ENCODE measurements at regions of chrX and their contacts with region 1.

Region 1: DNA sequence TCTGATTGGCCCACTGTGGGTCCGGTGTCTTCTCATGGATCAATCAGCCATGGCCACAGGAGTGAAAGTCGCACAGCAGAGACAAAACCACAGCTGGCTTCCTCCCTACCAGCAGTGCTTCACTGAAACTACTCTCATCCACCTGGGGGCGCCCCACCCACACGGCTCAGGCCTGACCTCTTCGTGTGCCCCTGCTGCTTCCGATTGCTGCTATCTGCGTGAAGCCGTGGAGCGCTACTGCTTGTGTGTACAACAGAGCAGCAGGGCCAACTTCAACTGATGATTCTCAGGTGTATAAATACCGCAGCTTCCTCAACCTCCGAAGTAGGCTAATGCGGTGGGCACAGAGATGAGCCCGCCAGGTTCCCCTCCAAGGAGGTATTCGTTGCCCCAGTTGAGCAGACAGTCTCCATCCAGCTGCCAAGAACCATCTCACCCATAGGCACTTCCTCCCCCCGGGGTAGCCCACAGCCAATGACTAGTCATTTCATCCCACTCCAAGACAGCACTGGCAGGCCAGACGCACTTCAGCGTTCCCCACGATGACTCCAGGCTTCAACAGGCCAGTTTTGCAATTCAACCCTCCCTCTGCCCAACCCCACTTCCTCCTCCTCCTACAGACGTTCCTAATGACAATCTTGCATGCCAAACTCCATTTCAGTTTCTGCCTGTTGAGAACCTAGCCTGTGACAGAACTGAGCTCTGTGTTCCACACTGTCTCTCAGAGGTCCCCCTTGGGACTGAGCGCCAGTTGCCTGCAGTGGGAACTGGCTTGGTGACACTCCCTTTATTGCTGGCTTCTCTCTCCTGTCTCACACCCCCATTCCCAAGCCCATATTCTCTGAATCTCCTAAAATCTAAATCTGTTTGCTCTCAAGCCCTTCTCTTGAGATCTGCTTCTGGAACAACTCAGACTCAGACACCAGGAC is 41.3 kb upstream of the ATP6AP2 start:
- DNase-seq: peak; percentile 56
- ATAC-seq: peak; percentile 90
- H3K4me3 ChIP-seq: no peak overlapping the region
- H3K27ac ChIP-seq: peak overlapping the region; percentile 59
- H3K4me1 ChIP-seq: peaks cover 11% of the 10 kb centered on the region
- H3K27me3 ChIP-seq: peaks cover 0 to 2% of the 10 kb centered on the region in 2 experiments; a peak in 2 of 4 replicates
- CTCF ChIP-seq: peak; percentile 30 to 51 (median 48); a peak in 5 of 6 replicates
- EP300 ChIP-seq: no peak
- POLR2A ChIP-seq: no peak
- RAD21 ChIP-seq: 0 out of 2 replicates have a peak, but pooled peaks have one; percentile 26

Region 2: DNA sequence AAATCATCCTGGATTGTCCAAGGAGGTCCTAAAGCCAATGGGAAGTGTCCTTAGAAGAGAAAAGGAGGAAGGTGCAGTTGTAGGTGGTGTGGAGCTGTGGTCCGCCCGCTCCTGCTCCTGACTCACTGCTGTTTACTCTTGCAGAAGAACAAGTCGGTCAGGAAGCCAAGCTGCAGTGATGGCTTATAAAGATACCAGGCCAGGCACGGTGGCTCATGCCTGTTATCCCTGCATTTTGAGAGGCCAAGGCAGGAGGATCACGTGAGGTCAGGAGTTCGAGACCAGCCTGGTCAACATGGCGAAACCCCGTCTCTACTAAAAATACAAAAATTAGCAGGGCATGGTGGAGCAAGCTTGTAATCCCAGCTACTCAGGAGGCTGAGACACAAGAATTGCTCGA is 25.1 kb before region 1 on chrX:
- CTCF ChIA-PET with region 1: no interaction called
- POLR2A ChIA-PET with region 1: no interaction called
- RAD21 ChIA-PET with region 1: no interaction called
- SMC1A ChIA-PET with region 1: no interaction called
- in situ Hi-C with region 1: no loop called
- intact Hi-C with region 1: no loop called
- DNase-seq: no peak
- ATAC-seq: no peak
- H3K4me3 ChIP-seq: no peak overlapping the region
- H3K27ac ChIP-seq: no peak overlapping the region
- H3K4me1 ChIP-seq: no peaks in the 10 kb centered on the region
- H3K27me3 ChIP-seq: no peaks in the 10 kb centered on the region; a peak in 1 of 4 replicates
- CTCF ChIP-seq: no peak
- EP300 ChIP-seq: no peak
- POLR2A ChIP-seq: no peak
- RAD21 ChIP-seq: no peak

Region 3: GRCh38 chrX:40552768-40553167 is 13.3 kb after region 1 on chrX:
- CTCF ChIA-PET with region 1: interaction called, 30 read pairs
- POLR2A ChIA-PET with region 1: no interaction called
- RAD21 ChIA-PET with region 1: interaction called, 8 read pairs
- SMC1A ChIA-PET with region 1: interaction called, 16 read pairs
- in situ Hi-C with region 1: no loop called
- intact Hi-C with region 1: no loop called
- DNase-seq: no peak
- ATAC-seq: peak; percentile 37
- H3K4me3 ChIP-seq: no peak overlapping the region
- H3K27ac ChIP-seq: no peak overlapping the region
- H3K4me1 ChIP-seq: no peaks in the 10 kb centered on the region
- H3K27me3 ChIP-seq: no peaks in the 10 kb centered on the region; a peak in 2 of 4 replicates
- CTCF ChIP-seq: peak in 2 of 3 experiments; percentile 20 to 38; a peak in 3 of 6 replicates
- EP300 ChIP-seq: no peak
- POLR2A ChIP-seq: no peak
- RAD21 ChIP-seq: peak; percentile 40

Region 4: GRCh38 chrX:40573763-40574162 is 34.3 kb after region 1 on chrX:
- CTCF ChIA-PET with region 1: interaction called, 50 read pairs
- POLR2A ChIA-PET with region 1: interaction called, 6 read pairs
- RAD21 ChIA-PET with region 1: interaction called, 18 read pairs
- SMC1A ChIA-PET with region 1: interaction called, 20 read pairs
- in situ Hi-C with region 1: no loop called
- intact Hi-C with region 1: no loop called
- DNase-seq: no peak
- ATAC-seq: peak; percentile 72
- H3K4me3 ChIP-seq: no peak overlapping the region
- H3K27ac ChIP-seq: no peak overlapping the region
- H3K4me1 ChIP-seq: peaks cover 3% of the 10 kb centered on the region; the same call in 1 of the 2 replicates
- H3K27me3 ChIP-seq: no peaks in the 10 kb centered on the region
- CTCF ChIP-seq: peak; percentile 86 to 90 (median 87)
- EP300 ChIP-seq: no peak
- POLR2A ChIP-seq: no peak
- RAD21 ChIP-seq: peak; percentile 48

Region 5: DNA sequence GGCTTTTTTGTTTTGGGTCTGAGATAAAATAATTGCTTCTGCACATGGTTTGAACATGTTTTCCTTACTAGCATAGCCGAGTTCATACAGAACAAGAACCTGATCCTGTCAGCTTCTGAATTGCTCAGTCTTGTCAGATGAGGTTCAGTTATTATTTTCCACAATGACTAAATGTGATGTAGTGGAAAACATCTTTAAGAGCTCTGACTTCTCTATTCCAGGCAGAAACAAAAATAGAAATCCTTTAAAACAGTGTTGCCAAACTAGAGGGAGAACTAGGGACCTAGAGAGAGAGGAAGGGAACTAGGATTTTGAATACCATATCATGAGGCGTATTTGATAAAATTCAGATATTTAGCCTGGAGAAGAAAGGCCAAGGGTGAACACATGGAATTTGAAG is 43.3 kb after region 1 on chrX:
- CTCF ChIA-PET with region 1: interaction called, 12 read pairs
- POLR2A ChIA-PET with region 1: interaction called, 6 read pairs
- RAD21 ChIA-PET with region 1: interaction called, 4 read pairs
- SMC1A ChIA-PET with region 1: interaction called, 4 read pairs
- in situ Hi-C with region 1: no loop called
- intact Hi-C with region 1: no loop called
- DNase-seq: no peak
- ATAC-seq: no peak
- H3K4me3 ChIP-seq: no peak overlapping the region
- H3K27ac ChIP-seq: no peak overlapping the region
- H3K4me1 ChIP-seq: no peaks in the 10 kb centered on the region
- H3K27me3 ChIP-seq: no peaks in the 10 kb centered on the region
- CTCF ChIP-seq: no peak
- EP300 ChIP-seq: no peak
- POLR2A ChIP-seq: no peak
- RAD21 ChIP-seq: no peak

Region 6: GRCh38 chrX:40603446-40603845 is 64.0 kb after region 1 on chrX:
- CTCF ChIA-PET with region 1: interaction called, 10 read pairs
- POLR2A ChIA-PET with region 1: no interaction called
- RAD21 ChIA-PET with region 1: no interaction called
- SMC1A ChIA-PET with region 1: interaction called, 5 read pairs
- in situ Hi-C with region 1: no loop called
- intact Hi-C with region 1: no loop called
- DNase-seq: no peak
- ATAC-seq: no peak
- H3K4me3 ChIP-seq: no peak overlapping the region
- H3K27ac ChIP-seq: no peak overlapping the region
- H3K4me1 ChIP-seq: no peaks in the 10 kb centered on the region
- H3K27me3 ChIP-seq: no peaks in the 10 kb centered on the region
- CTCF ChIP-seq: no peak
- EP300 ChIP-seq: no peak
- POLR2A ChIP-seq: no peak
- RAD21 ChIP-seq: no peak